PC-3 (cell line): ENCODE measurements at regions of chr4 and their contacts with region 1.

Region 1: DNA sequence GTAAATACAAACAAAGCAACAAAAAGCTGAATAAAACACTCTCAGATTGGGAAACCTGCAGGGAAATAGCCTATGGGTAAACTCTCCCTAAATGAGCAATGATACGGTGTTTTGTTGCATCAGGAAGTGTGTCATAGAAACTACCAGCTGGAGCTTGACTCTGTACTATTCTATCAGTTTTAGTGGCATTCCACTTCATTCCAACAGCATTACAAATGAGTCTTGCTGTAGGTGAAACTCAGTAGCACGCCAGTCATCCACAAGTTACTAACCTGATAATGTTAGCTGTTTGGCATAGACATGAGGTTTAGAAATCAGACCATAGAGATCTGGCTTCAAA is 24.9 kb downstream of the FGFBP1 start:
- DNase-seq: peak; percentile 94
- ATAC-seq: peak; percentile 93
- H3K4me3 ChIP-seq: no peak overlapping the region
- H3K27ac ChIP-seq: peak overlapping the region; percentile 99
- H3K4me1 ChIP-seq: peaks cover 49% of the 10 kb centered on the region
- H3K27me3 ChIP-seq: no peaks in the 10 kb centered on the region
- CTCF ChIP-seq: no peak

Region 2: DNA sequence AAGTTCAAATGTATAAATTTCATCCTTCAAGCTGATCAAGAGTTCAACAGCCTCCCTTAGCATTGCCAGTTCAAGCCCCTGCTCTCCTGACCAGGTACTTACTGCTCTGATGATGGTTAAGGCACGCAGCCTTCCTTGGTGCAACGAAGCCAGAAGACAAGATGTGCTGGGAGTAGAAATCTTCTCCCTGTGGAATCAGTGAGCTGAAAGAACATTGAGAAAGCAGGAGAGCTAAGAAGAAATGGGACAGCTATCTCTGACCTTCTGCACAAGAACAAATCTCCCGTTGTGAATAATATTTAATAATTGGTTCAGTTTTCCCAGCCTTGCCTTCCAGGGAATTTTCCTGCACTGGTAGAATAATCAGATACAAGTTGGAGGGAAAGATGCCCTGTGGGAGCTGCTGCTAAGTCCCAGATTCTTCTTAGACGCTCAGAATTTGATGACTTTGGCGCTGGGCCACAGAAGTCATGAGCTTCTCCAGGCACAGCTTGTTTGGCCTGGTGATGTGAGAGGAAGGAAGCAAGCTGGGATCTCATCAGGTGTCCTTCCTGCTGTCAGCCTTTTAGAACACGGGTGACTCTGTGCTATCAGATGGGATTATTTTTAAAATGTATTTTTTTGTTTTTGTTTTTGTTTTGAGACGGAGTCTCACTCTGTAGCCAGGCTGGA is 57.7 kb before region 1 on chr4:
- CTCF ChIA-PET with region 1: no interaction called
- POLR2A ChIA-PET with region 1: no interaction called
- intact Hi-C with region 1: no loop called
- DNase-seq: no peak
- ATAC-seq: no peak
- H3K4me3 ChIP-seq: no peak overlapping the region
- H3K27ac ChIP-seq: no peak overlapping the region
- H3K4me1 ChIP-seq: no peaks in the 10 kb centered on the region
- H3K27me3 ChIP-seq: no peaks in the 10 kb centered on the region
- CTCF ChIP-seq: no peak

Region 3: DNA sequence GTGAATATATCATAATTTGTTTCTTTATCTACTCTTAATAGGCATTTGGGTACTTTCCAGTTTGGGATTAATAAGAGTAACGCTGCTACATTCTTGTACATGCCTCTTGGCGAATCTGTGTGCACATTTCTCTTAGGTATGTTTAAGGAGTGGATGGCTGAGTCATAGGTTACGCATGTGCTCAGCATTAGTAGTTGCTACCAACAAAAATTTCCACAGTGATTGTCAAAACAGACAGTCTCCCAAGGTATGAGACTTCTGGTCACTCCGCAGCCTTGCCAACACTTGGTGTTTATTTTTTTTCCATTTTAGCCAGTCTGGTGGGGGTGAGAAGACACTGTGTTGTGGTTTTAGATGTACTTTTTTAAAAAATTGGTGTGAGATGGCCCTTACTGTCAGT is 19.6 kb before region 1 on chr4:
- CTCF ChIA-PET with region 1: no interaction called
- POLR2A ChIA-PET with region 1: no interaction called
- intact Hi-C with region 1: loop called (anchors 1 kb)
- DNase-seq: peak; percentile 95
- ATAC-seq: peak; percentile 72
- H3K4me3 ChIP-seq: no peak overlapping the region
- H3K27ac ChIP-seq: peak overlapping the region; percentile 98
- H3K4me1 ChIP-seq: peaks cover 53% of the 10 kb centered on the region
- H3K27me3 ChIP-seq: no peaks in the 10 kb centered on the region
- CTCF ChIP-seq: no peak